Right ventricle myocardium inferior (tissue), 1 donor: ENCODE measurements at regions of chr19 and their contacts with region 1.

Region 1: DNA sequence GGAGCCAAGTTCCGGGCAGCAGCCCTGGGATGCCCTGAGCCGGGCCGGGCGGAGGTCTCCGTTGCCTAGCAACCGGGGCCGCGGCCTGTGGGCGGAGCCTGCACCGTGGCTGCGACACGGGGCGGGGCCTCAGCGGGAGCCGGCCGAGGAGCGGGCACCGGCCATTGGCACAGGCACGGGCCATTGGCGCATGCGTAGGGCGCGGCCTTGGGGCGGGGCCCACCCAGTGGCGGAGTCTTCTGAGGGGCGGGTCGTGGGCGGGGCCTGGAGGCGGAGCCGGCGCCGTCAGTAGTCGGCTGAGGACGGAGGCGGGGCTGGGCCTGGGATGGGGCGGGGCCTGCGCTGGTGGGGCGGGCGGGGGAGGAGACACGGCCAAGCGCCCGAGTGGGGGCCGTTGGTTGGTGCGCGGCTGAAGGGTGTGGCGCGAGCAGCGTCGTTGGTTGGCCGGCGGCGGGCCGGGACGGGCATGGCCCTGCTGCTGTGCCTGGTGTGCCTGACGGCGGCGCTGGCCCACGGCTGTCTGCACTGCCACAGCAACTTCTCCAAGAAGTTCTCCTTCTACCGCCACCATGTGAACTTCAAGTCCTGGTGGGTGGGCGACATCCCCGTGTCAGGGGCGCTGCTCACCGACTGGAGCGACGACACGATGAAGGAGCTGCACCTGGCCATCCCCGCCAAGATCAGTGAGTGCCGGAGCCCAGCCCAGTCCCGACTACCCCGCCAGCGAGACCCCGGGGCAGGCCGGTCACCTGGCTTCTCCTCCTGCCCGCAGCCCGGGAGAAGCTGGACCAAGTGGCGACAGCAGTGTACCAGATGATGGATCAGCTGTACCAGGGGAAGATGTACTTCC is at the start of gene IZUMO4:
- DNase-seq: peak; percentile 100
- ATAC-seq: peak; percentile 92
- total RNA-seq, gene IZUMO4: 1.4 TPM

Region 2: DNA sequence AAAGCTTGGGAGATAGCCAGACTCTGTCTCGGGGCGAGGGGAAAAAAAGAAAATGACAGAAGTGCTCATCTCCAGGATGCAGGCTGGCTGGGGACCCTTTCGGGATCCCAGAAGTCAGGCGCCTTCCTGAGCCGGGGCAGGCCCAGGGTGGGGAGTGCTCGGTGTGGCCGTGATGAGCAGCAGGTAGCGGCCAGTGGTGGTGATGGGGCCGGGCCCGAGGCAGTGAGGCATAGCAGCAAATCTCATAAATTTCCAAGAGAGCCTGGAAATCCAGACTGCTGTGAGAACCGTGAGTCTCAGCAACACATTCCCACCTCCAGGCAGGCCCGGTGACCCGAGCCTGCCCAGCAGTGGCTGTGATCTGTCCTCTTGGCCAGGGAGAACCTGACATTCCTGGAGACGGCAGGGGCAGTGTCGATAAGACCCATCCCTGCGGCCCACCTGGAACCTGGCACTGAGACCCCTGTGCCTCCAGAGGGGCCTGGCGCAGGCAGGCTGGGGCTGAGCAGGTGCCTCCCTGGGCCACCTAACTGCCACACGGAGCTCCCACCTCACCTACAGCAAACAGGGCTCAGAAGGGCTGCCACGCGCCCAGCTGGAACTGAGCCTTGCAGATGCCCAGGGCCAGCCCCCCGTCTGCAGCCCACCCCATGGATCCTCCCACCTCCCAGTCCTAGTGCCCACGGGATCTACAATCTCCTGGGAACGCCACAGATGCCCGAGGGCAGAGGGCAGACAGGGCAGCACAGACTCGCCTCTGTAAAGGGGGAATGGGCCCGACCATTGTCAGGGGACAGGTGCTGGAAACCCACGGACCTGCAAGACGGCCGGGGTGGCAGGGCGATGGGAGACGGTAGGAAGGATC is 23.4 kb after region 1 on chr19:
- intact Hi-C with region 1: loop called (anchors 2 kb)
- DNase-seq: no peak
- ATAC-seq: no peak

Region 3: DNA sequence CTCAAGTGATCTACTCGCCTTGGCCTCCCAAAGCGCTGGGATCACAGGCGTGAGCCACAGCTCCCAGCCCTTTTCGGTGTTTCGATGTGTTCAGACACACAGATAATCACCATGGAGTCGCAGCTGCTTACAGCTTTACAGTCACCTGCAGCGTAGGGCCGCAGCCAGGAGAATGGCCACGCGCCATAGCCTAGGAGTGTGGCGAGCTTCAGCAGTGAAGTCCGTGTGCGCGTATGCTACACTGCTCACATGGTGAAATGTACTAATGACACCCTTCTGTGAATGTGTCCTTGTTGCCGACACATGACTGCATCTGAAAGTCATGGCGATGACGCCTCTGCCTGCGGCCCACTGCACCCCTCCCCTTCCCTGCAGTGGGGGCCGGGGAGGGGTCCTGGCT is 31.1 kb after region 1 on chr19:
- intact Hi-C with region 1: loop called (anchors 2 kb)
- DNase-seq: peak; percentile 79
- ATAC-seq: peak; percentile 89

Region 4: DNA sequence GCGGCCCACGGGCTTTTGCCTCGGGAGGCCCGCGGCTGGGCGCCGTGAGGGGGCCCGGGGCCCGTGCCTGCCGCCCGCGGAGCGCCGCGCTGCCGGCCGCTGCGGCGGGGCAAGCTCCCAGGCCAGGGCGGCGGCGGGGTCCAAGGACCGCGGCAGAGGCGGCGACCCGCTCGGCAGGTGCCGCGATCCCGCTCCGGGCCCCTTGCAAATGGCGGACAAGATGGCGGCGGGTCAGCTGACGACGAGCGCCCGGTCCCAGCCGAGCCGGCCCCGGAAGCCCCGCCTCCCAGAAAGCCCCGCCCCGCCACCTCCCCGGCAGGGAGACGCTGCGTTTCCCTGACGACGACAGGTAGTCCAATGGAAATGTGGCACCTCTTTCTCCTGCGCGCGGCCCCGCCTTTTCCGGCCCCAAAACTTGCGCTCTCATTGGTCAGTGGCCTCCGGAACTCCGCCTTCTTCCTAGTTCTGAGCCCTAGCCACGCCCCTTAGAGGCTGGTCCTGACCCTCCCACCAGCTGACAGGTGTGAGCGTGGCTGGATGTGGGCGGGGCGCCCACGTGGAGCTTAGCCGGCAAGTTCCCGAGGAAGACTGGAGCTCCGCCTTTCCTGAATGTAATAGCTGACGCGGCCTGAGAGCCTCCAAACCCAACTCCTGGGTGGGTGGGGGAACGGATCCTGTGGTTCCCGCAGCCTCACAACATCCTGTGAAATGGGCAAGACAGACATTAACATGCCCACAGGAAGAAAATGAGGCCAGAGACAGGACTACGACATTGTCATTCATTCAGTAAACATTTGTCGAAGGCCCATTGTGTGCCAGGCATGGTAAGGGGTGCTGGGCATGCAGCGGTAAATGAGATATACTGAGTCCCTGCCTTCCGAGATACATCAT is 54.9 kb after region 1 on chr19 and contains the start of gene AP3D1:
- intact Hi-C with region 1: loop called (anchors 1 kb)
- DNase-seq: peak; percentile 99
- ATAC-seq: peak; percentile 99
- total RNA-seq, gene AP3D1: 71.8 TPM